ENCODE measurements at regions of chr20 and their contacts with region 1.

Region 1: DNA sequence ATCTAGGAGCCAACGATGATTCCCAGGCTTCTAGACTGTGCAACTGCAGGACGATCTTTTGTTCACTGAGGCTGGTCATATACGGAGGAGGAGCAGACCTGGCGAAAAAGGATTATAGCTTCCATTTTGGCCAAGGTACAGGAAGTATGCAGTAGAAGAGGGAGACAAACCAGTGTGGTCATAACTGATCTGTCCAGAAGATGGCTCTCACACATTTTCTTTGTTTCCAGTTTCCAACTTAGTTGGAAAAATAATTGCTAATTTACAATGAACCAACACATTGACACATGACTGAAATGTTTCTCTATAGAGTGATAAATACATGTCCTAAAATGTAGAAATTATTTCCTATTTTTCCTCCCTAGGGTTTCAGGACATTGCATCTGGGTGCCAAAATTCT is 364.1 kb upstream of the BTBD3 start:
- DNase-seq: peak; percentile 54
- ATAC-seq: peak; percentile 85
- H3K4me3 ChIP-seq: no peak overlapping the region
- H3K27ac ChIP-seq: no peak overlapping the region
- H3K4me1 ChIP-seq: no peaks in the 10 kb centered on the region
- H3K27me3 ChIP-seq: no peaks in the 10 kb centered on the region
- CTCF ChIP-seq: peak; percentile 76

Region 2: GRCh38 chr20:11311659-11312224 is 241.9 kb before region 1 on chr20:
- CTCF ChIA-PET with region 1: no interaction called
- POLR2A ChIA-PET with region 1: no interaction called
- intact Hi-C with region 1: no loop called
- DNase-seq: no peak
- ATAC-seq: no peak
- H3K4me3 ChIP-seq: no peak overlapping the region
- H3K27ac ChIP-seq: no peak overlapping the region
- H3K4me1 ChIP-seq: no peaks in the 10 kb centered on the region
- H3K27me3 ChIP-seq: no peaks in the 10 kb centered on the region
- CTCF ChIP-seq: no peak

Region 3: GRCh38 chr20:11529047-11529446 is 24.6 kb before region 1 on chr20:
- CTCF ChIA-PET with region 1: no interaction called
- POLR2A ChIA-PET with region 1: no interaction called
- intact Hi-C with region 1: no loop called
- DNase-seq: no peak
- ATAC-seq: no peak
- H3K4me3 ChIP-seq: no peak overlapping the region
- H3K27ac ChIP-seq: no peak overlapping the region
- H3K4me1 ChIP-seq: no peaks in the 10 kb centered on the region
- H3K27me3 ChIP-seq: no peaks in the 10 kb centered on the region
- CTCF ChIP-seq: no peak

Region 4: DNA sequence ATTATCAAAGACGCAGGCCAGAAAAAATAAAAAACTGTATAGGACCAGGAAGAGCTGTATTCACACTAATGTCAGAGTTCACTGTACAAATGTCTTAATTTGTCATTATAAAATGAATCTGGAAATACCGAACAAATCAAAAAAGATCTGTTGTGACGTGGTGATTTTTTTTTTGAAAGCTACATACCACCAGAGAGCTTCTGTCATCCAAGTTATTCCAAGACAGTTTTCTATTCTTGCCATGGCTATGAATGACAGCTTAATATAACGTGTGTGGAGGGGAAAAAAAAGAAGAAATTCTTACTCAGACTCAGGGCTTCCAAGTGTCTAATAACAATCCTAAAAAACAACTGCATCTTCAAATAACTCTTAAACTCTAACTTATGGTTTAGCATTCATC is 35.3 kb after region 1 on chr20:
- CTCF ChIA-PET with region 1: no interaction called
- POLR2A ChIA-PET with region 1: no interaction called
- intact Hi-C with region 1: no loop called
- DNase-seq: no peak
- ATAC-seq: no peak
- H3K4me3 ChIP-seq: no peak overlapping the region
- H3K27ac ChIP-seq: no peak overlapping the region
- H3K4me1 ChIP-seq: no peaks in the 10 kb centered on the region
- H3K27me3 ChIP-seq: peaks cover 17% of the 10 kb centered on the region; the same call in 1 of the 2 replicates
- CTCF ChIP-seq: no peak

Region 5: DNA sequence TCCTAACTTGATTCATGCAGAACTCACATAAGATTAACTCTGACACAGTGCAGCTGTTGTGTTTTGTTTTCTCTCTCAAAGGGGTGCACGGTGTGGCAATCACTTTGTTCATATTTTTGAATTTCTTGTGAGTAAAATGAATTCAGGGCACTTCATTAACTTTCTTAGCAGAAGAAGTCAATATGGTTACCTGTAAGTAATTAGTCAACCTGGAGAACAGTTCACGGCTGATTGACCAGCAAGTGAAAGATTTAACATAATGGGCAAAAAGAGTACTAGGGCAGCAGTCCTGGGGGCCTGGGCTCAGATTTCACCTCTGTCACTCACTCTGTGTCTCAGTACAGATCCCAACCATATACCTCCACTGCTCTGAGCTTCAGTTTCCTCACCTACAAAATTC is 1352.8 kb after region 1 on chr20:
- CTCF ChIA-PET with region 1: no interaction called
- POLR2A ChIA-PET with region 1: no interaction called
- intact Hi-C with region 1: loop called (anchors 5 kb)
- DNase-seq: no peak
- ATAC-seq: no peak
- H3K4me3 ChIP-seq: no peak overlapping the region
- H3K27ac ChIP-seq: no peak overlapping the region
- H3K4me1 ChIP-seq: no peaks in the 10 kb centered on the region
- H3K27me3 ChIP-seq: peaks cover 73% of the 10 kb centered on the region
- CTCF ChIP-seq: no peak

Measured in PC-3 (cell line).